ENCODE measurements at regions of chr20 and their contacts with region 1.

Region 1: DNA sequence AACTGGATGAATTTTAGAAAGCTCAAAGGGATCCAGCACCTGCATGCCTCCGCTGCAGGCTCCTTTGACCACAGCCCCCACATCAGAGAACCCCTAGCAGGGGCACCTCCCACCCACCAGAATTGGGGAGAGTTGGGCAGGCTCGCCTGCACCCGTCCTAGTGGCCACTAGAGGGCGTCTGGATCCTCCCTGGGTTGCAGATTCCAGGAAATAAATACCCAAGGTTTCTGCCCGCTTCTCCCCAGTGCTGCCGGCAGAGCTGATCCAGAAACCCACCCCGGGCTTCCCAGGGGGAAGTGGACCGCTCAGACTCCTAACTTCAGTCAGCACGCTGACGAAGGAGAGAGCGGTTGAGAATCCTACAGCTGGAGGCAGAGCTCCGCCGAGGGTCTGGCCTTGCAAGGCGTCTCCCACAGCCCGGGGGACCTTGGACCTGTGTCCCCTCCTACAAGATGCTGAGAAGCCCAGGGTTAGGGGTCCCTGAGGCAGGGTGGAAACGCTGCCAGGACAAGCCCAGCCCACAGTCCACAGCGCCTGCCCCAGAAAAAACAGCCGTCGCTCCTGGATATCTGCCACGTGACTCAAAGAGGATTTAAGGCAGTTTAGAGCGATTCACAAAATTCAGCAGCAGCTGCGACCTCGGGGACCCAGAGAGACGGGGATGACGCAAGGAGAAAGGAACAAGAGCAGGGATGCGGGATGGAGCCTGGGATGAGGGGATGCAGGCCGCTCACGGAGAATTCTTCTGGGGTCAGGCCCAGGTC is 32.6 kb upstream of the PHACTR3 start:
- DNase-seq: peak; percentile 63
- ATAC-seq: peak; percentile 71
- H3K4me3 Mint-ChIP-seq: no peak overlapping the region
- H3K27ac Mint-ChIP-seq: no peak overlapping the region
- H3K4me1 Mint-ChIP-seq: no peaks in the 10 kb centered on the region
- H3K27me3 Mint-ChIP-seq: peaks cover 20% of the 10 kb centered on the region

Region 2: GRCh38 chr20:59560588-59561227 is 11.0 kb before region 1 on chr20:
- CTCF ChIA-PET with region 1: interaction called, 19 read pairs
- DNase-seq: no peak
- ATAC-seq: no peak
- H3K4me3 Mint-ChIP-seq: no peak overlapping the region
- H3K27ac Mint-ChIP-seq: no peak overlapping the region
- H3K4me1 Mint-ChIP-seq: peaks cover 9% of the 10 kb centered on the region
- H3K27me3 Mint-ChIP-seq: peaks cover 3% of the 10 kb centered on the region

Measured in activated CD8-positive, alpha-beta memory T cell treated with anti-CD3 and anti-CD28 coated beads, Interleukin-2, amount 10 ng/mL, durations not matched to agents 7 days and 5 days (primary cell).